ENCODE measurements at regions of chr15 and their contacts with region 1.

Region 1: GRCh38 chr15:85059734-85060133 is 78.1 kb downstream of the PDE8A start:
- DNase-seq: no peak
- ATAC-seq: no peak
- H3K4me3 ChIP-seq: no peak overlapping the region
- H3K27ac ChIP-seq: no peak overlapping the region
- H3K4me1 ChIP-seq: peaks cover 9% of the 10 kb centered on the region
- H3K27me3 ChIP-seq: no peaks in the 10 kb centered on the region
- CTCF ChIP-seq: no peak
- POLR2A ChIP-seq: no peak
- RAD21 ChIP-seq: no peak

Region 2: GRCh38 chr15:85108136-85108535 is 48.4 kb after region 1 on chr15:
- CTCF ChIA-PET with region 1: no interaction called
- POLR2A ChIA-PET with region 1: no interaction called
- dilution Hi-C with region 1: no loop called
- in situ Hi-C with region 1: no loop called
- intact Hi-C with region 1: loop called (anchors 2 kb)
- DNase-seq: no peak
- ATAC-seq: no peak
- H3K4me3 ChIP-seq: no peak overlapping the region
- H3K27ac ChIP-seq: no peak overlapping the region
- H3K4me1 ChIP-seq: no peaks in the 10 kb centered on the region
- H3K27me3 ChIP-seq: no peaks in the 10 kb centered on the region
- CTCF ChIP-seq: no peak
- POLR2A ChIP-seq: no peak
- RAD21 ChIP-seq: no peak